ENCODE measurements at regions of chr5 and their contacts with region 1.

Region 1: DNA sequence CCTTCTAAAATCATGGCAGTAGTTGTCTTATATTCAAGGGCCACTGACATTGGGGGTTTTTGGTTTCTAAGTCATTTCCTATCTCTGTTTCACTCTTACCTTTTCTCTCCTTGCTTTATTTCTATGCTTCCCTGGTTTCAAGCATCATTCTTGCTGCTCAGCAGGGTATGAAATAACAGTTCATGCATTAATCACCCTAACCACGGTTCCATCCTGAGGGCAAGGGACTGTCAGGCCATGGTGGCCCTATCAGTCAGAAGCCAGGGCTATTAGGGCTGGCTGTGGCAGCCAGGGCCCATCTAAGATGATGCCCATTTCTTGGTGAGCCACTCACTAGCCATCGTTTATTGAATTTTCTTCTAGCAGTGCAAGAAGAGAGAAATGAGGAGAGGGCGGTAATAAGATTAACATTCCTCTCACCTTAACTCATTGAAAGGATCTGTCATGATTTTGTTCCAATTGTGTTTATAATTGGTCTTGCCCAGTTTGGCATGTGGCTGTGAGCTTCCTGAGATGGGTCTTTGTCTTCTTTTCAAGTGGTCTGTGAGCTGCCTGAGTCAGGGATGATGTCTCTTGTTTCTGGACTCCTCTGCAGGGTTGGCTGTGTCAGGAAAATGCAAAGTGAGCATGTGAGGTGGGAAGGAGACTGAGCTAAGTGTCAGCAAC is 45.2 kb downstream of the CYSTM1 start:
- DNase-seq: peak; percentile 74
- H3K4me3 ChIP-seq: no peak overlapping the region
- H3K27ac ChIP-seq: peak overlapping the region; percentile 19
- H3K4me1 ChIP-seq: peaks cover 52% of the 10 kb centered on the region
- H3K27me3 ChIP-seq: no peaks in the 10 kb centered on the region
- CTCF ChIP-seq: no peak

Region 2: DNA sequence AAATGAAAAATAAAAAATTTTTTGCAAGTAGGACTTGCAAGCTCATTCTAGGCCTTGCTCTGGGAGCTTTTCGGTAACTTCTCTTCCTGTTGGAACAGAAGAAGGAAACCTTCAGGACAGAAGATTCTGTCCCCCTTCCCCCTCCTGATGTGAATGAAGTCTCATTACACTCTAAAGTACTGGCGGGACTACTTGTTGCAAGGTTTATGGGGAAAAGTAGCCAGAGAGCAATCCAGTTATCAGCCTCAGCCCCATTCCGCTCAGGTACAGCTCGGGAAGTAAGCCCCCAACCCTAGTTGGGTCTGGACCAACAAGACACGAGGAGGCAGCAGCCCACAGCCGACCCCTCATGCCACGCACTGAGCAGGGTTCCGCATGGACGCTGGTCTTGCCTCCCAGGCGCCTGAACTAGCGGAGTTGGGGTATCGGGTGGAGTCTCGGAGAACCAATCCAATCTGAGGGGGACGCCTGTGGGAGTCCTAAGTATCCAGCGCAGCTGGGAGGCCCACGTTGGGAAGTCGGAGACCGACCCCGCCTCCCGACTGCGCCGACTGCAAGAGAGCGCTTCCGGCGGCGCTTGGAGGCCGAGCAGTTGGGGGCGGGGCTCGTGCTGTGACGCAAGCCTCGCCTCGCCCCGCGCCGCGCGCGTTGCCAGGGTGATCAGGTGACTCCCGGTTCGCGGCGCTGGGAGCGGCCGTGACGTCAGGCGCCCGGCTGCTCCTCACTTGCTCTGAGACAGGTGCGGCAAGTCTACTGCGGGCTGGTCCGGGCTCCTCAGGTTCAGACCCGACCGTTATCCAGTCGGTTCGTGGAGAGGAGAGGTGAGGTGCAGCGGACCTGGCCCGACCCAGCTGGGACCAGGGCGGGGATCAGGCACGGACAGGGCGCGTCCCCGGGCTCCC is 45.4 kb before region 1 on chr5 and contains the start of gene CYSTM1:
- CTCF ChIA-PET with region 1: no interaction called
- dilution Hi-C with region 1: no loop called
- in situ Hi-C with region 1: no loop called
- intact Hi-C with region 1: loop called (anchors 2 kb)
- DNase-seq: peak; percentile 96
- H3K4me3 ChIP-seq: peak within 1 kb of the TSS; percentile 58 to 94 (median 67)
- H3K27ac ChIP-seq: peak within 1 kb of the TSS; percentile 72
- H3K4me1 ChIP-seq: peaks cover 4% of the 10 kb centered on the region
- H3K27me3 ChIP-seq: no peaks in the 10 kb centered on the region
- CTCF ChIP-seq: no peak
- total RNA-seq, gene CYSTM1: 27.5 to 31.7 TPM

Region 3: DNA sequence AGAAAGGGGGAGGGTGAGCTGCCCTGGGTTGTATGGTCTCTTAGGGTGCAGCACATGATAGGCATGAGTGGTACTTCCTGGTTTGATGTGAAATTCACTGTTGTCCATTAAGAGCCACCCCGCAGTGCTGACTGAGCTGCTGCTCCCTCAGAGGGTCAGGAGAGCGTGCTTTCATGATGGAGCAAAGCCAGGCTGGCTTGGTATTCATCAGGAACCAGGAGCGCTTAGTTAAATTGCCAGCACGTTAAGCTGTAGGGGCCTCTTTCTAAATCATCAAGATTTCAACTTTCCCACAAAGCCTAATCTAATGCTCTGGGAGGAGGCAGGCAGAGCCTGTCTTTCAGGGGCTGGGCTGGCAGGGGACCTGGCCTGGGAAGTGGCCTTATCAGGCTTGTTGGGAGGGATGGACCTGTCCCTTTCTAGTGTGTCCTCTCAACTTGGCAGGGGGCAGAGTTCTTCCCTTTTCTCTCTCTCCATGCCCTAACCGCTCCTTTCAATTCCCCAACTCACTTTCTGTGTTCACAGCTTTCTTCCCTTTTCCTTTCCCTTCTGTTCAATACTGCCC is 37.3 kb before region 1 on chr5:
- CTCF ChIA-PET with region 1: no interaction called
- dilution Hi-C with region 1: no loop called
- in situ Hi-C with region 1: loop called in 1 of 2 experiments (anchors 5 kb)
- intact Hi-C with region 1: no loop called
- DNase-seq: no peak
- H3K4me3 ChIP-seq: no peak overlapping the region
- H3K27ac ChIP-seq: no peak overlapping the region
- H3K4me1 ChIP-seq: no peaks in the 10 kb centered on the region
- H3K27me3 ChIP-seq: no peaks in the 10 kb centered on the region
- CTCF ChIP-seq: no peak

Region 4: DNA sequence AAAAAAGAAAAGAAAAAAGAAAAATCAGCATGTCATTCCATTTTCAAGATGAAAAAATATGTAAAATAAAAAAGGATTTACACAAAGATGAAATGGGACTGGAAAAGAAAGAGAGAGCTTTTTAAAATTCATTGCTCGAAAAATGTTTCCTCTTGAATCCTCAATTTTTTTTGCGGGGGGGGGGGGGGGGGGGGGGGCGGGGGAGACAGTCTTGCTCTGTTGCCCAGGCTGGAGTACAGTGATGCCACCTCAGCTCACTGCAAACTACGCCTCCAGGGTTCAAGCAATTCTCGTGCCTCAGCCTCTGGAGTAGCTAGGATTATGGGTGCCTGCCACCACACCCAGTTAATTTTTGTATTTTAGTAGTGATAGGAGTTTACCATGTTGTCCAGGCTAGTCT is 66.3 kb after region 1 on chr5:
- CTCF ChIA-PET with region 1: interaction called, 11 read pairs
- dilution Hi-C with region 1: no loop called
- in situ Hi-C with region 1: no loop called
- intact Hi-C with region 1: no loop called
- DNase-seq: no peak
- H3K4me3 ChIP-seq: no peak overlapping the region
- H3K27ac ChIP-seq: no peak overlapping the region
- H3K4me1 ChIP-seq: no peaks in the 10 kb centered on the region
- H3K27me3 ChIP-seq: no peaks in the 10 kb centered on the region
- CTCF ChIP-seq: no peak

Region 5: DNA sequence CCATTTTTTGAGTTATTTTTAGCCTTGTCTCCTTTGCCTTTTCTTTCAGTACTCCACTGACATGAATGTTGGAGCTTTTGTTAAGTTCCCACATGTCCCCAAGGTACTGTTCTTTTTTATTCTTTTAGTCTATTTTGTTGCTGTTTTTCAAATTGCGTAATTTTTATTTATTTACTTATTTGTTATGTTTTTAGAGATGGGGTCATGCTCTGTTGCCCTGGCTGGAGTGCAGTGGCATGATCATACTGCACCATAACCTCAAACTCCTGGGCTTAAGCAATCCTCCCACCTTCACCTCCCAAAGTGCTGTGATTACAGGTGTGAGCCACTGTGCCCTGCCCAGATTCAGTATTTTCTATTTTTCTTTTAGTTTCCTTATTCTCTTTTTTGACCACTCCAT is 560.3 kb after region 1 on chr5:
- CTCF ChIA-PET with region 1: no interaction called
- dilution Hi-C with region 1: no loop called
- in situ Hi-C with region 1: no loop called
- intact Hi-C with region 1: no loop called
- DNase-seq: no peak
- H3K4me3 ChIP-seq: no peak overlapping the region
- H3K27ac ChIP-seq: no peak overlapping the region
- H3K4me1 ChIP-seq: no peaks in the 10 kb centered on the region
- H3K27me3 ChIP-seq: no peaks in the 10 kb centered on the region
- CTCF ChIP-seq: no peak

Measured in mammary epithelial cell (primary cell).